Calu3 (cell line): ENCODE measurements at regions of chrX and their contacts with region 1.

Region 1: DNA sequence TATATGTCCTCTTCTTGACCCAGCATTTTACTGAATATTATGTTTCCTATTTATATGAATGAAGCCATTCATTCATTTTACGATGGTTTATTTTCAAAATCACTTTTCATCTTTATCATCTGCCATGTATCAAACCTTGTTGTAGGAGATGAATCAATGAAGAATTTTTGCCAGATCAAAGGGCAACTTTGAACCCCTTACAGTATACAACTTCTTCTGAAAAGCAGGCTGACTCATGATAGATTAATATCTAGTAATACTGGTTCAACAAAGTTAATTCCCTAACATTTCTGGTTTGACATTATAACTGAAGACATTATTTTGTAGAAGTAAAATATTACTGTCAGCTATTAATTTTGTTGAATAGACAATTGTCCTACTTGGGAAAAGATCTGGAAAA is 226.0 kb downstream of the RPA4 start:
- DNase-seq: no peak
- H3K4me3 Mint-ChIP-seq: no peak overlapping the region
- H3K27ac Mint-ChIP-seq: peak overlapping the region; percentile 73
- H3K4me1 Mint-ChIP-seq: peaks cover 22% of the 10 kb centered on the region
- H3K27me3 Mint-ChIP-seq: no peaks in the 10 kb centered on the region
- CTCF ChIP-seq: no peak

Region 2: DNA sequence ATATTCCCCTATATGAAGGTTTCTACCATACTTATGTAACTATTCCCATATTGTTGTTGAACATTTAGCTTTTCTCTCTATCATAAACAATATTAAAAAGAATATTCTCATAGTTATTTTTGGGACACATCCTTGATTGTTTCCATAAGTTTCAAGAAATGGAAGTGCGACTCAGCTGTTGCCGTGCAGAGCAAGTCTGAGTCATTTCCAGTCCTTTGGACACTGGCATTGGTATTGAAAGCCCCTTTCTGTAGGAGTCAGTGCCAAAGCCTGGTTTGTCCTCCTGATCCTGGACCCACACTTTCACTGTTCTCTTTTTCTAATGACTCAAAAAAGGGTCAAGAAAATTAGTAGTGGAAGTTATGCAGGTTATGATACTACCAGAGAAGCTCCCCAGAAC is 533.4 kb before region 1 on chrX:
- CTCF ChIA-PET with region 1: no interaction called
- intact Hi-C with region 1: no loop called
- DNase-seq: no peak
- H3K4me3 Mint-ChIP-seq: no peak overlapping the region
- H3K27ac Mint-ChIP-seq: no peak overlapping the region
- H3K4me1 Mint-ChIP-seq: no peaks in the 10 kb centered on the region
- H3K27me3 Mint-ChIP-seq: no peaks in the 10 kb centered on the region
- CTCF ChIP-seq: no peak

Region 3: GRCh38 chrX:97126020-97126419 is 16.3 kb after region 1 on chrX:
- CTCF ChIA-PET with region 1: no interaction called
- intact Hi-C with region 1: loop called (anchors 1 kb)
- DNase-seq: no peak
- H3K4me3 Mint-ChIP-seq: no peak overlapping the region
- H3K27ac Mint-ChIP-seq: no peak overlapping the region
- H3K4me1 Mint-ChIP-seq: no peaks in the 10 kb centered on the region
- H3K27me3 Mint-ChIP-seq: no peaks in the 10 kb centered on the region
- CTCF ChIP-seq: no peak